ENCODE measurements at regions of chr7 and their contacts with region 1.

Region 1: DNA sequence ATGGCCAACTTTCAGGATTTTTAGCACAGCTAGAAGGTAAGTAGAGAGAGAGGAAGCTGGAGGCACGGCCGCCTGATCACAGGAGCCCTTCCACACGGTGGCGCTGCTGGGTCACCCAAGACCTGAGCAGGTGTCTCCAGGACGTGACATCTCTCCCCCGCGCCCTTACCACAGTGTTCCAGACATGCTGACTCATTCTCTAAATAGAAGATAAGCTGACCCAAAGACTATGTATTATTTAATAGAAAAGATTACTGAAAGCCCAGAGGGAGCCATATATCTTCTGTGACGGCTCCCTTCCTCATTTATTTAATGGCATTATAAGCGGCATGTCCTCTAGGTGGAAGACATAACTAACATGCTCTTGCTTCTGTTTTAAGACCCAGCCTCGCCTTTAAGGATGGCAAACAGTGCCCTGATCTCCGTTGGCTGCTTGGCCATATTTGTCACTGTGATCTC is 26.0 kb upstream of the MALSU1 start:
- DNase-seq: peak; percentile 80
- H3K4me3 Mint-ChIP-seq: peak overlapping the region; percentile 72
- H3K27ac Mint-ChIP-seq: peak overlapping the region; percentile 5
- H3K4me1 Mint-ChIP-seq: peaks cover 24% of the 10 kb centered on the region
- H3K27me3 Mint-ChIP-seq: peaks cover 4% of the 10 kb centered on the region

Region 2: DNA sequence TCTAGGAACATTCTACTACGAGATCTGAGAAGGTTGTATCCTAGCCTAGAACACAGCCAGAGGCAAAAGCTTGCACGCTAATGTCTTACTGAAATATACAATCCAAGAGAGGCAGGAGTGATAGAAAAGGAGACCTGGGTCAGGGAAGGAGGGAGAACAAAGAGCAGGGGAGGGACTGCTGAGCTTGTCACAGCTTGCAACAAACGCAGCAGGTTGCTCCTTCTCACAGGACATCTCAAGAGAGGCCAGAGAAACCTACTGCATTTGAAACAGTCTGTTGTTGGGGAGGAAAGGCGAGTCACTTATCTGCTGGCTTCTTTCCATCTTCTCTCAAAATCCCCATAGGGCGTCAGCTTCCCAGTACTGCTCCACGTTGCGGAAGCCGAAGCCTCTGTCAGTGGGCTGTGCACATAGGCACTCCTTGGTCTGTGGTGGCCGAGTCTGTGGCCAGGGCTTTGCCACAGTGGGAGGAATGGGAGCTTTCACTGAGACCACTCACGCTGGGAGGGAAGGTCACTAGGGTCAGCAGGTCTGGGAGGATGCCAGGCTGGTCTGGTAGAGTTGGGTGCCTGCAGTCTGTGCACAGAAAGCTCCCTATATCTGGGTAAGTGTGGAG is 52.4 kb before region 1 on chr7:
- intact Hi-C with region 1: no loop called
- DNase-seq: no peak
- H3K4me3 Mint-ChIP-seq: no peak overlapping the region
- H3K27ac Mint-ChIP-seq: no peak overlapping the region
- H3K4me1 Mint-ChIP-seq: no peaks in the 10 kb centered on the region
- H3K27me3 Mint-ChIP-seq: peaks cover 14% of the 10 kb centered on the region

Region 3: GRCh38 chr7:23298885-23299769 is 26.0 kb after region 1 on chr7 and contains the start of gene MALSU1:
- intact Hi-C with region 1: loop called (anchors 1 kb)
- DNase-seq: peak; percentile 93
- H3K4me3 Mint-ChIP-seq: peak within 1 kb of the TSS; percentile 88
- H3K27ac Mint-ChIP-seq: peak within 1 kb of the TSS; percentile 88
- H3K4me1 Mint-ChIP-seq: peaks cover 38% of the 10 kb centered on the region
- H3K27me3 Mint-ChIP-seq: peaks cover 4% of the 10 kb centered on the region
- total RNA-seq, gene MALSU1: 92.3 and 92.8 TPM in 2 replicates

Region 4: GRCh38 chr7:23431702-23432199 is 158.6 kb after region 1 on chr7:
- intact Hi-C with region 1: loop called (anchors 1 kb)
- DNase-seq: no peak
- H3K4me3 Mint-ChIP-seq: no peak overlapping the region
- H3K27ac Mint-ChIP-seq: no peak overlapping the region
- H3K4me1 Mint-ChIP-seq: peaks cover 4% of the 10 kb centered on the region
- H3K27me3 Mint-ChIP-seq: peaks cover 25% of the 10 kb centered on the region

Region 5: GRCh38 chr7:23467806-23468516 is 194.8 kb after region 1 on chr7:
- intact Hi-C with region 1: loop called (anchors 1 kb)
- DNase-seq: no peak
- H3K4me3 Mint-ChIP-seq: peak overlapping the region; percentile 78
- H3K27ac Mint-ChIP-seq: peak overlapping the region; percentile 79
- H3K4me1 Mint-ChIP-seq: peaks cover 44% of the 10 kb centered on the region
- H3K27me3 Mint-ChIP-seq: peaks cover 69% of the 10 kb centered on the region

Region 6: DNA sequence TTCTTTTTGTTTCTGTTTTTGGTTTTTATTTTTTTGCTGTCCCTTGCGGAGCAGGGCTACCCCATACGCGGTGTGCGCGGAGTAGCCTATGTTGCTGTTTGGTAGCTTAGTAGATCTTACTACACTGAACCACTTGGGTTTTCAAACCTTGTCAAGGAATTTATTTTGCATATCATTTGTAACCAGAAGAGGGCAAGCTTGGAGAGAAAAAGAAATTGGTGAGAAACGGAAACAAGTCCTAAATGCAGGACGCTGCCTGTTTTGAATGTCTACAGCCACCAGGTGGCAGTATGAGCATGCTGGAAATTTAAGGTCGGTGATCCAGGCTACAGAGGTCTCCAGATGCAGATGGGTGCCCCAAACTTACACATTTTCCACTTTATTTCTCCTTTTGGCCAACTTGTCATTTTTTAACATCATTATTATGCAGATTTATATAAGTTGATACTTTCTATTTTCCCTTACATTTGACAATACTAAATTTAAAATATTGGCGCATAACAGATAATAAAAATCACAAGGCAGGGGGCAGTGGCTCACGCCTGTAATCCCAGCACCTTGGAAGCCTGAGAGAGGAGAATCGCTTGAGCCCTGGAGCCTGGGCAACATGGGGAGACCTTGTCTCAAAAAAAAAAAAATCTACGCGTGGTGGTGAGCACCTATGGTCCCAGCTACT is 273.9 kb after region 1 on chr7:
- intact Hi-C with region 1: loop called (anchors 1 kb)
- DNase-seq: peak; percentile 63
- H3K4me3 Mint-ChIP-seq: no peak overlapping the region
- H3K27ac Mint-ChIP-seq: no peak overlapping the region
- H3K4me1 Mint-ChIP-seq: peaks cover 21% of the 10 kb centered on the region
- H3K27me3 Mint-ChIP-seq: peaks cover 2% of the 10 kb centered on the region